K562 (cell line): ENCODE measurements at regions of chr3 and their contacts with region 1.

Region 1: DNA sequence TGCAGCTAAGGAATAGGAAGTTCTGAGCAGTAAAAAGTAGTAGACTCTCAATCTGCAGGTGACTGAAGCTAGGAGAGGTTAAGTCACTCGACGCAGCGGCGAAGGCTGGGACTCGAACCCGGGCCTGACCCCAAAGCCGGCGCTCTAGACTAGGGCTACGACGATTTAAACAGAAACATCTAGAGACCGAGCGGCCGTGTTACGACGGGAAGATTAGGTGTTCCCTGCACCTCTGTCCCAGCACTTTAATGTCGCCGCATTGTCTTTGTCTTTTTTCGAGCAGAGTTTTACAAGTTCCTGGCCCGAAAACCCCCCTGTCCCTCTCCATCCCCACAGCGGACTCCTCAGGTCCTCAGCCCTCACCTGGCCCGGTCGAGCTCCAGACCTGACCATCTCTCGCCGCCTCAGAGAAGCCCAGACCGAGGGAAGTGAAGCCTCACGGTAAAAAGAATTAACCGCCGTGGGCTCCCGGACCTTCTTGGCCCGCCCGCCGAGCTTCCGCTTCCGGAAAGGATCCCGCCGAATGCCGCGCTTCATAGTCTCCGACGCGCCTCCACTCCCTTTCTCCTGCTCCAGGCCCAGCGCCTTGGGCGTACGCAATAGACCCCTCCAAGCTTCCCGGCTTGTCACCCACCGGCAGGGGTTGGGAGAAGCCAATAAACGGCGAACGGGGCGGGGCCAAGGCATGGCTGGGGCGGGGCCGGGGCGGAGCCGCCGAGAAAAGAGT is at the start of gene CCDC14:
- DNase-seq: peak; percentile 72 to 92 (median 80)
- ATAC-seq: peak; percentile 99
- H3K4me3 ChIP-seq: peak within 1 kb of the TSS; percentile 82
- H3K27ac ChIP-seq: peak within 1 kb of the TSS; percentile 95
- H3K4me1 ChIP-seq: no peaks in the 10 kb centered on the region; a peak in 2 of 5 replicates
- H3K27me3 ChIP-seq: no peaks in the 10 kb centered on the region
- CTCF ChIP-seq: no peak
- EP300 ChIP-seq: no peak
- POLR2A ChIP-seq: peak; percentile 86
- RAD21 ChIP-seq: no peak
- polyA plus RNA-seq, gene CCDC14: 18.6 to 30.9 TPM

Region 2: GRCh38 chr3:123552095-123552714 is 408.7 kb before region 1 on chr3:
- CTCF ChIA-PET with region 1: no interaction called
- POLR2A ChIA-PET with region 1: no interaction called
- in situ Hi-C with region 1: no loop called
- intact Hi-C with region 1: no loop called
- DNase-seq: peak; percentile 3 to 11 (median 10)
- ATAC-seq: no peak
- H3K4me3 ChIP-seq: no peak overlapping the region
- H3K27ac ChIP-seq: no peak overlapping the region
- H3K4me1 ChIP-seq: no peaks in the 10 kb centered on the region; a peak in 1 of 5 replicates
- H3K27me3 ChIP-seq: no peaks in the 10 kb centered on the region
- CTCF ChIP-seq: peak; percentile 12 to 31 (median 24); a peak in 3 of 6 replicates
- EP300 ChIP-seq: no peak
- POLR2A ChIP-seq: no peak
- RAD21 ChIP-seq: peak in 1 of 2 experiments; percentile 27; a peak in 1 of 4 replicates

Region 3: GRCh38 chr3:123642182-123642956 is 318.6 kb before region 1 on chr3:
- CTCF ChIA-PET with region 1: no interaction called
- POLR2A ChIA-PET with region 1: interaction called, 4 read pairs
- in situ Hi-C with region 1: no loop called
- intact Hi-C with region 1: loop called (anchors 10 kb)
- DNase-seq: peak; percentile 79 to 86 (median 82)
- ATAC-seq: peak; percentile 100
- H3K4me3 ChIP-seq: no peak overlapping the region
- H3K27ac ChIP-seq: no peak overlapping the region
- H3K4me1 ChIP-seq: peaks cover 0 to 3% of the 10 kb centered on the region in 2 experiments; a peak in 1 of 5 replicates
- H3K27me3 ChIP-seq: peaks cover 6 to 30% of the 10 kb centered on the region in 2 experiments; a peak in 4 of 5 replicates
- CTCF ChIP-seq: peak; percentile 93 to 98 (median 97)
- EP300 ChIP-seq: no peak
- POLR2A ChIP-seq: no peak
- RAD21 ChIP-seq: peak; percentile 53 to 62

Region 4: GRCh38 chr3:123941121-123941520 is 19.8 kb before region 1 on chr3:
- CTCF ChIA-PET with region 1: no interaction called
- POLR2A ChIA-PET with region 1: no interaction called
- in situ Hi-C with region 1: no loop called
- intact Hi-C with region 1: no loop called
- DNase-seq: no peak
- ATAC-seq: no peak
- H3K4me3 ChIP-seq: no peak overlapping the region
- H3K27ac ChIP-seq: no peak overlapping the region
- H3K4me1 ChIP-seq: no peaks in the 10 kb centered on the region
- H3K27me3 ChIP-seq: no peaks in the 10 kb centered on the region
- CTCF ChIP-seq: no peak
- EP300 ChIP-seq: no peak
- POLR2A ChIP-seq: no peak
- RAD21 ChIP-seq: no peak